Mammary epithelial cell (primary cell): ENCODE measurements at regions of chr19 and their contacts with region 1.

Region 1: DNA sequence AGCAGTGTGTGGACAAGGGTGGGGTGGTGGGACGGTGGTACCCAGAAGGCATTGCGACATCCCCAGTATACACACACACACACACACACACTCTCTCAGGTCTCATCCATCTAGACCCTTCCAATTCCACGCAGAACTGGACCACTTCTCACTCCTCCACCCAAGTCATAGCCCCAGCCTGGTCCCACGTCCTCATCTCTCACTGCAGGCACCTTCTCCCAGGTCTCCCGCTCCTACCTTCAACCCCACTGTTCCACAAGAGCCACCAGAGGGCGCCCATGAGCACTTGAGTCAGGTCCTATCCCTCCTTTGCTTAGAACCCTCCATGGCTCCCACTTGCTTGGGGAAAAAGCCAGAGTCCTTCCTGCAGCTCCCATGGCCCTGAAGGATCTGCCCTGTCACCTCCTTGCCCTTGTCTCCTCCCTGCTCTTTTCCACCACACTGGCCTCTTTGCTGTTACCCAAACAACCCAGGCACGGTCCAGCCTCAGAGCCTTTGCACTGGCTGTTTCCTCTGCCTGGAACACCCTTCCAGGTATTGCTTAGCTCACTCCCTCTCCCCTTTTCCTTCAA is 62.6 kb downstream of the IER2 start:
- DNase-seq: peak; percentile 33
- H3K4me3 ChIP-seq: no peak overlapping the region
- H3K27ac ChIP-seq: no peak overlapping the region
- H3K4me1 ChIP-seq: no peaks in the 10 kb centered on the region
- H3K27me3 ChIP-seq: no peaks in the 10 kb centered on the region
- CTCF ChIP-seq: peak; percentile 59 to 62

Region 2: DNA sequence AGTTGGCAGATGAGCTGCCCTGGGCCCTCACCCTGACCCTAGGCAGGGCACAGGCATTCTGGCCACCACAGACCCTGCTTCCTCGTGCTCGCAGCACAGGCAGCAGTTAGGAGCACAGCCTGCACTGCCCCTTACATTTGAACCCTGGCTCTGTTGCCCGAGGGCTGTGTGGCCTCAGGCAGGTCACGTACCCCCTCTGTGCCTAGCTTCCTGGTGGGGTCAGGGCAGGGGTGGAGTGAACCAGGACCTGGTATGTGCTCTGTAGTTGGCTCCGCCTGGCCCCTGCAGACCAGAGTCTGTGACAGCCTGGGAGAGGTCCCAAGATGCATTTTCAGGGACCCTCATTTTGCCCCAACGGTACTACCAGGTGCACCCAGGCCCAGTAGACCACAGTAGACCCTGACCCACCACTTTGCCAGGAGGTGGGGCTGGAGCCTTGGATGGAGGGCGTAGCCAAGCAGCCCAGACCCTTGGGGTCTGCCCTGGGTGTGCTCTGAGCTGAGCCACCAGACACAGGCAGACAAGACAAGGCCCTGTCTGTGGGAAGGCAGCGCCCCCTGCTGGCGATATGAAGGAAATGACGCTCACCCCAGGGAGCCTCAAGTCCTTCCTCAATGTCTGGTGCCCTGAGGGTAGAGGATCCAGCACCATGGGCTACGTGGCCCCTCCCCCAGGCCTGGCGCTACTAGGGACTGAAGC is 119.3 kb before region 1 on chr19:
- CTCF ChIA-PET with region 1: no interaction called
- dilution Hi-C with region 1: no loop called
- in situ Hi-C with region 1: no loop called
- intact Hi-C with region 1: no loop called
- DNase-seq: peak; percentile 52
- H3K4me3 ChIP-seq: no peak overlapping the region
- H3K27ac ChIP-seq: no peak overlapping the region
- H3K4me1 ChIP-seq: peaks cover 2% of the 10 kb centered on the region
- H3K27me3 ChIP-seq: no peaks in the 10 kb centered on the region
- CTCF ChIP-seq: peak; percentile 80 to 89

Region 3: DNA sequence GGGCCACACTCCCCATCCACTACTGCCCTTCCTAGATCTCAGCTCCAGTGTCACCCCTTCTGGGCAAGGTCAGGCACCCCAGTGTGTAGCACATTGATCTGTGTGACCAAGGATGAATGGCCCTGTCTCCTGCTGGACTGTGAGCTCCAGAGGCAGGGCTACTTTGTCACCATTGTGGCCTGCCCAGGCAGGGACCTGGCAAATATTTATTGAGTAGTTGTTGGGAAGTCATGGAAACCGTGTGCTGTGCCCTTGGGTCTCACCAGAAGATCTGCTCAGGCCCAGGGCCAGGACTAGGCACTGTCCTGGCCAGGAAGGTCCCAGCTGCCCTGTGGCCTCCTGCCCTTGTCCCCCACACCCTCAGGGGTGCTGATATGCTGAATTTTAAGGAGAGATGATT is 84.3 kb before region 1 on chr19:
- CTCF ChIA-PET with region 1: no interaction called
- dilution Hi-C with region 1: loop called (anchors 5 kb)
- in situ Hi-C with region 1: no loop called
- intact Hi-C with region 1: no loop called
- DNase-seq: no peak
- H3K4me3 ChIP-seq: no peak overlapping the region
- H3K27ac ChIP-seq: no peak overlapping the region
- H3K4me1 ChIP-seq: peaks cover 9% of the 10 kb centered on the region
- H3K27me3 ChIP-seq: no peaks in the 10 kb centered on the region
- CTCF ChIP-seq: no peak

Region 4: GRCh38 chr19:13176345-13176744 is 36.5 kb before region 1 on chr19:
- CTCF ChIA-PET with region 1: no interaction called
- dilution Hi-C with region 1: loop called (anchors 5 kb)
- in situ Hi-C with region 1: no loop called
- intact Hi-C with region 1: no loop called
- DNase-seq: no peak
- H3K4me3 ChIP-seq: no peak overlapping the region
- H3K27ac ChIP-seq: no peak overlapping the region
- H3K4me1 ChIP-seq: peaks cover 10% of the 10 kb centered on the region
- H3K27me3 ChIP-seq: no peaks in the 10 kb centered on the region
- CTCF ChIP-seq: no peak

Region 5: DNA sequence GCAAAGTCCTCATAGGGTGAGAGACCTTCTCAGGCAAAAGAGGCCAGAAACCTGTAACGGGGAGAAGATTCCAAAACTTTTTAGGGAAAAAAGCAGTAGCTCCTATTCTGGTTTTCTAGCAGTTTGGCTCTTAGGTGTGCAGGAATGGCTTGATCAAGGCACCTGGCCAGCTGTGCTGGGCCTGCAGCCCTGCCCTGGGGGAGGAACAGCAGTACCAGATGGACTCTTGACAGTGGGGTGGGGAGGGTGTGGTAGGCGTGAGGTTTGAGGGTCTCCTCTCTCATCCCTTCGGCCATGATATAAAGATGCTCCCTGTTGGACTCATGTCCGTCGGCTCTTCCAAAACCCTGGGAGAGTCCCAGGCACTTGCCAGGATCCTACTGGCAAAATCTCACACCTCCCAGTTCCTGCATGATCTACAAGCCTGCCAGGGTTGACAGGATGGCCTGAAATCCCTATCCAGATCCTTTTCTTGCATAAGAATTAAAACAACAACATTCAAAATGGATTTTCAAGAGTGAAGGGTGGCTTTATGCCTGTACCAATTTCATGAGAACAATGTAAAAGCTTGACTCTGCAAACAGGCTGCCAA is 57.8 kb after region 1 on chr19:
- CTCF ChIA-PET with region 1: no interaction called
- dilution Hi-C with region 1: loop called (anchors 5 kb)
- in situ Hi-C with region 1: no loop called
- intact Hi-C with region 1: no loop called
- DNase-seq: no peak
- H3K4me3 ChIP-seq: no peak overlapping the region
- H3K27ac ChIP-seq: no peak overlapping the region
- H3K4me1 ChIP-seq: no peaks in the 10 kb centered on the region
- H3K27me3 ChIP-seq: no peaks in the 10 kb centered on the region
- CTCF ChIP-seq: no peak

Region 6: GRCh38 chr19:13476071-13476470 is 263.2 kb after region 1 on chr19:
- CTCF ChIA-PET with region 1: no interaction called
- dilution Hi-C with region 1: no loop called
- in situ Hi-C with region 1: no loop called
- intact Hi-C with region 1: no loop called
- DNase-seq: no peak
- H3K4me3 ChIP-seq: no peak overlapping the region
- H3K27ac ChIP-seq: no peak overlapping the region
- H3K4me1 ChIP-seq: no peaks in the 10 kb centered on the region
- H3K27me3 ChIP-seq: no peaks in the 10 kb centered on the region
- CTCF ChIP-seq: no peak